Activated CD4-positive, alpha-beta T cell treated with anti-CD3 and anti-CD28 coated beads, Interleukin-2, amount 10 ng/mL, durations not matched to agents 24 days and 14 days (primary cell): ENCODE measurements at regions of chr1 and their contacts with region 1.

Region 1: DNA sequence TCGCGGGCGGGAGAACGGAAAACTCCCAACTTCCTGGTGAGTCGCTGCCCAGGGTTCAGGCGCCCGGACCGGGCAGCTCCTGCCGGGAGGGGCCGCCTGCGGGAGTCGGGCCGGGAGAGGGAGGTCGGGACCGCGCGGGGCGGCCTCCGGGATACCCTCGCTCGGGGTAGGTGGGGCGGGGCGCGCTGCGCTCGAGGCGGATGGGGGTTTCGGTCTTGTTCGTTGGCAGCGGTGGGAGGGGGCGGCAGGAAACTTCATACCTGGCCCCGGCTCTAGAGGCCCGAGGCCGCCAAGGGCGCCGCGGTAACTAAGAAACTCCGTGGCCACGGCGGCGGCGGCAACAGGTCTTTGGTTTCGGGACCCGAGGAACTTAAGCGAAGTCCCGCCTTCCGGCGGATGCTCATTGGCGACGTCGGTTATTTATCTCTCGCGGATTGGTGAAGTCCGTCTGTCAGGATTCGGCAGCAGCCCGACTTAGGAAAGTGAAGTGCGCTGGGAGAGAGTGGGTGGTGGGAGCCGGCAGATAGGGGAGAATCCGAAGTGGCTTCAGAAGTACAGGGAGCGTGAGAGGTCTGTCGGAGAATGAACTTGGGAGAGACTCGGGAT is 546 bp downstream of the NEK7 start:
- DNase-seq: peak; percentile 95
- H3K4me3 Mint-ChIP-seq: peak overlapping the region; percentile 97
- H3K27ac Mint-ChIP-seq: peak overlapping the region; percentile 95
- H3K4me1 Mint-ChIP-seq: peaks cover 22% of the 10 kb centered on the region
- H3K27me3 Mint-ChIP-seq: no peaks in the 10 kb centered on the region

Region 2: GRCh38 chr1:197775282-197776262 is 381.8 kb before region 1 on chr1 and contains the start of gene DENND1B:
- intact Hi-C with region 1: loop called (anchors 5 kb)
- DNase-seq: peak; percentile 95
- H3K4me3 Mint-ChIP-seq: peak within 1 kb of the TSS; percentile 89
- H3K27ac Mint-ChIP-seq: peak within 1 kb of the TSS; percentile 99
- H3K4me1 Mint-ChIP-seq: peaks cover 61% of the 10 kb centered on the region
- H3K27me3 Mint-ChIP-seq: no peaks in the 10 kb centered on the region
- total RNA-seq, gene DENND1B: 15.0 and 16.8 TPM in 2 replicates

Region 3: DNA sequence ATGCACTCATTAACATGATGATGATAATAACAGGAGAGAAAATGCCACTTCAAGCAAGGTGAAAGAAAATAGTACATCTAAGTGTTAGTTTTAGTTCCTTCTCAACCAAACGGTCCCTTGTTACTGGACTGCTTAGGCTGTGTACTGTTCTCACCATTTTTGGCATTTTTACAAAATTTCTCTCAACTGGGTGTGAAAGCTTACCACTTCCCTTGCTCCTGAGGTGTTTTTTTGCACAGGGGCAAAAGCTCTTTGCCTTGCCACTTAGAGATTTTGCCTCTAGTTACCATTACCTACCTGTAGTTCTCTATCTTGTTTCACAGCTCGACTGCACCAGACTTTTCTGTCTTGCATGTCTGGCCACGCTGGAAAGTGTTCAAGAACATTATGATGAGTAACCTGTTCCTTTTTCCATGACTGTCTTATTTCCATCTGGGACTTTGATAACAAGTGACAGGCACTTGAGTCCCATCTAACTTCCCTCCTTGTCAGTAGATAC is 10.1 kb after region 1 on chr1:
- intact Hi-C with region 1: loop called (anchors 1 kb)
- DNase-seq: peak; percentile 74
- H3K4me3 Mint-ChIP-seq: peak overlapping the region; percentile 73
- H3K27ac Mint-ChIP-seq: peak overlapping the region; percentile 94
- H3K4me1 Mint-ChIP-seq: peaks cover 65% of the 10 kb centered on the region
- H3K27me3 Mint-ChIP-seq: no peaks in the 10 kb centered on the region

Region 4: GRCh38 chr1:198253668-198254067 is 96.3 kb after region 1 on chr1:
- intact Hi-C with region 1: loop called (anchors 1 kb)
- DNase-seq: peak; percentile 58
- H3K4me3 Mint-ChIP-seq: peak overlapping the region; percentile 21
- H3K27ac Mint-ChIP-seq: peak overlapping the region; percentile 83
- H3K4me1 Mint-ChIP-seq: peaks cover 29% of the 10 kb centered on the region
- H3K27me3 Mint-ChIP-seq: no peaks in the 10 kb centered on the region

Region 5: GRCh38 chr1:198318085-198318484 is 160.7 kb after region 1 on chr1:
- intact Hi-C with region 1: no loop called
- DNase-seq: no peak
- H3K4me3 Mint-ChIP-seq: no peak overlapping the region
- H3K27ac Mint-ChIP-seq: no peak overlapping the region
- H3K4me1 Mint-ChIP-seq: peaks cover 19% of the 10 kb centered on the region
- H3K27me3 Mint-ChIP-seq: no peaks in the 10 kb centered on the region

Region 6: GRCh38 chr1:198638894-198639635 is 481.7 kb after region 1 on chr1 and contains the start of gene PTPRC:
- intact Hi-C with region 1: loop called (anchors 5 kb)
- DNase-seq: peak; percentile 84
- H3K4me3 Mint-ChIP-seq: peak within 1 kb of the TSS; percentile 89
- H3K27ac Mint-ChIP-seq: peak within 1 kb of the TSS; percentile 95
- H3K4me1 Mint-ChIP-seq: peaks cover 47% of the 10 kb centered on the region
- H3K27me3 Mint-ChIP-seq: no peaks in the 10 kb centered on the region
- total RNA-seq, gene PTPRC: 436 and 438 TPM in 2 replicates